CD14-positive monocyte (primary cell): ENCODE measurements at regions of chr5 and their contacts with region 1.

Region 1: GRCh38 chr5:142655339-142656267 is 30.3 kb downstream of the FGF1 start:
- DNase-seq: peak; percentile 33 to 57 (median 51)
- H3K4me3 ChIP-seq: no peak overlapping the region
- H3K4me3 Mint-ChIP-seq: no peak overlapping the region
- H3K27ac ChIP-seq: no peak overlapping the region
- H3K27ac Mint-ChIP-seq: no peak overlapping the region
- H3K4me1 ChIP-seq: no peaks in the 10 kb centered on the region
- H3K4me1 Mint-ChIP-seq: no peaks in the 10 kb centered on the region
- H3K27me3 ChIP-seq: peaks cover 3 to 10% of the 10 kb centered on the region in 2 donors
- H3K27me3 Mint-ChIP-seq: peaks cover 6 to 18% (median 15%) of the 10 kb centered on the region in 3 donors
- CTCF ChIP-seq: peak; percentile 98

Region 2: DNA sequence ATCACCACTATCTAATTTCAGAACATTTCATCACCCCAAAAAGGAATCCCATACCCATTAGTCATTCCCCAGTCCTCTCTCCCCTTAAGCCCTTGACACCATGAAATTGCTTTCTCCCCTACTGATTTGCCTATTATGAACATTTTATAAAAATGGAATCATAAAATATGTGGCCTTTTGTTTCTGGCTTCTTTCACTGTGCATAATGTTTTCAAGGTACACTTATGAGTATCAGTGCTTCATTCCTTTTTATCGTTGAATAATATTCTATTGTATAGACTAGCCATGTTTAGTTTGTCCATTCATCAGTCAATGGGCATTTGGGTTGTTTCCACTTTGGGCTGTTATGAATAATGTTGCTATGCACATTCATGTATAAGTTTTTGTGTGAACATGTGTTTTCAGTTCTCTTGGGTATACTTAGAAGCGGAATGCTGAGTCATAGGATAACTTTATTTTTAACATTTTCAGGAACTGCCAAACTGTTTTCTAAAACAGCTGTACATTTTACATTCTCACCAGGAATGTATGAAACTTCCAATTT is 70.7 kb after region 1 on chr5:
- intact Hi-C with region 1: no loop called
- DNase-seq: peak; percentile 67 to 86 (median 86)
- H3K4me3 ChIP-seq: peak overlapping the region in 1 of 3 experiments; percentile 35
- H3K4me3 Mint-ChIP-seq: peak overlapping the region in 1 of 2 donors; percentile 57
- H3K27ac ChIP-seq: peak overlapping the region in 1 of 2 donors; percentile 76
- H3K27ac Mint-ChIP-seq: peak overlapping the region; percentile 80 to 93 (median 89)
- H3K4me1 ChIP-seq: peaks cover 41 to 47% of the 10 kb centered on the region in 2 donors
- H3K4me1 Mint-ChIP-seq: peaks cover 44% of the 10 kb centered on the region
- H3K27me3 ChIP-seq: no peaks in the 10 kb centered on the region
- H3K27me3 Mint-ChIP-seq: peaks cover 0 to 2% (median 0%) of the 10 kb centered on the region in 3 donors
- CTCF ChIP-seq: no peak

Region 3: DNA sequence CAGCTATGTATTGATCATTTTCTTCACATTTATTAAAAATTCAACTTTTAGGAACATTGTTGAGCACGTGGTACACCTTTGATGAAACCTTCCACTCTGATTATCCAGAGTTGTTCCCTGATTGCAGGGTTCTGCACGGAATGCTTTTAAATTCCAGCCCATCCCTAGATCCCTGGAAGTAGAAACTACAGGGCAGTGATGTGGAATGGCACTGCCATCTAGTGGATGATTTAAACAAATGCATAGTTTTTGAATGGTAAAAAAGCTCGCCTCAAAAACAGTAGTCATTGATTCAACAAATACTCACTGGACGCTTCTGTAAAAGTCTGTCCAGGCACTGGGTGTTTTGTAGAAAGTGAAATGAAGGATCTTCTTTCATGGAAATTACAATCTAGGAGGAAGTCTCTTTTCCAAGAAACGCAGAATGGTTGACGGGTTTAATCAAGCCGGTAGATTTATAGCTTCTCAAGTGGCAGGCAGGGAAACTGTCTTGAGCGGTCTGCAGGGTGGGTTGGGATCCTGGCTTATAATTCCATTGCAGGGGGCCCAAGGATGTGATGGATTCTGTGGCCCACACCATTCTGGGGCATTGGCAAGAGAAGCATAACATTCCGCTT is 233.0 kb after region 1 on chr5:
- intact Hi-C with region 1: loop called in 1 of 2 experiments (anchors 5 kb)
- DNase-seq: peak in 2 of 3 donors; percentile 35 to 48
- H3K4me3 ChIP-seq: no peak overlapping the region
- H3K4me3 Mint-ChIP-seq: no peak overlapping the region
- H3K27ac ChIP-seq: no peak overlapping the region
- H3K27ac Mint-ChIP-seq: peak overlapping the region in 1 of 7 donors; percentile 69
- H3K4me1 ChIP-seq: peaks cover 0 to 3% of the 10 kb centered on the region in 2 donors
- H3K4me1 Mint-ChIP-seq: peaks cover 10% of the 10 kb centered on the region
- H3K27me3 ChIP-seq: no peaks in the 10 kb centered on the region
- H3K27me3 Mint-ChIP-seq: no peaks in the 10 kb centered on the region
- CTCF ChIP-seq: peak; percentile 82